Panc1 (cell line): ENCODE measurements at regions of chr1 and their contacts with region 1.

Region 1: DNA sequence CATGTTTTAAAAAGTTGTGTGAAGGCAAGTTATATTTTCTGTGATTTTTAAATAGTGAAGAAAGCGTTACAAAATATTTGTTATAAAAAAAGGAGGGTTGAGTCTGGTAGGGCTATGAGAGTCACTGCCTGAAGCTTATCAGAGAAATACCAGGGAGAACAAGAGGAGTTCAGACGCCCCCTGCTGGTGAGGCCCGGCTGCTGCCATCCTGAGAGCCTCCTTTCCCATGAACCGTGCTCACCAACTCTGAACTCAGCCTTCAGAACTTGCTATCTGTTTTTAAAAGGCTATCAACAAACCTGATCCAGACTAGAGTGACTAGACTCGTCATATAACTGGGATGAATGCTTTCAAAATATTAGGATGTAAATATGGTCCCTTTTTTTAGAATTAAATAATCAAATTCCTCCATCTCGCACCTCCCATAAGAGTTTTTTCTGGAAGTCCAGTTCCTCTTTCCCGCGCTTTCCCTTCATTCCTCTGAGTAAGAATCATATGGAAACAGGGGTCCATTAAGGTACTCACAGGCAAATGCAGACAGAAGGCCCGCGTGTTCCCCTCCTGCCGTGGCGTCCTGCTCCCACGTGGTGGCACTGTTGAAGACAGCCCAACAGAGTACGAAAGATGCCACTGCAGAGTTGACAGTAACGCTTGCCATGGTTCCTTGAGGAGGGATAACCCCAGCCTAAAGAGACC is 26.2 kb upstream of the SPATA6 start:
- DNase-seq: peak; percentile 57
- ATAC-seq: peak; percentile 95
- H3K4me3 ChIP-seq: peak overlapping the region in 1 of 2 experiments; percentile 15; a peak in 1 of 4 replicates
- H3K27ac ChIP-seq: no peak overlapping the region
- H3K4me1 ChIP-seq: peaks cover 3% of the 10 kb centered on the region; the same call in 1 of the 2 replicates
- H3K27me3 ChIP-seq: no peaks in the 10 kb centered on the region
- CTCF ChIP-seq: peak; percentile 98

Region 2: DNA sequence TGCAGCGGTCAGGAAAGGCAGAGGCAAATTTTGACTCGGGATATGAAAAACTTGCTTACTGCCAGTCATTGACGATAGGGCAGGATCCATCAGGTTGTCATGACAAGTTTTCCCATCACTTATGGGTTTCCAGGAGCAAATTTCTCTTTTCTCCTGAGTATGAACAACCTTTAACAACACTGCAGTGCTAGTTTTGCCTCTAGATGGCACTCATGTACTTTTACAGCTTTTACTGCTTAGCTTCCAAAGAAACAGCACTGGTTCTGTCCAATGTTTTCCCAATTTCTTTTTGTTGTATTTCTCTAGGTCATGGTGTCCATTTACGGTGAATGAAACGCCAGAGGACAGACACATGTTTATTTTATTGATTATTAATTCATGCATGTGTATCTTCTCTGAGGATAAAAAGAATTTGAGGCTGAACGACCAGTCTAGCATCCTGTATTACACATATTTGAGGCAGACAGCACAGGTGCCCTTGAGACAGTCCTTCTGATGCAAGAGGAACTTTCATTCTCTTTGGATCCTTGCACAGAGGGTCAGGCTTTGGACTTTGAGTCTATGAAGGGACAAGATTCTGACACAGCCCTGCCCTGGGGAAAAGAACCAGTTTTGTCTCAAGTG is 388.7 kb before region 1 on chr1:
- CTCF ChIA-PET with region 1: no interaction called
- POLR2A ChIA-PET with region 1: no interaction called
- in situ Hi-C with region 1: no loop called
- intact Hi-C with region 1: loop called (anchors 5 kb)
- DNase-seq: peak; percentile 51
- ATAC-seq: peak; percentile 89
- H3K4me3 ChIP-seq: no peak overlapping the region
- H3K27ac ChIP-seq: no peak overlapping the region
- H3K4me1 ChIP-seq: no peaks in the 10 kb centered on the region
- H3K27me3 ChIP-seq: no peaks in the 10 kb centered on the region; the same call in none of the 2 replicates
- CTCF ChIP-seq: peak; percentile 85

Region 3: GRCh38 chr1:48249868-48250267 is 248.4 kb before region 1 on chr1:
- CTCF ChIA-PET with region 1: no interaction called
- POLR2A ChIA-PET with region 1: no interaction called
- in situ Hi-C with region 1: no loop called
- intact Hi-C with region 1: loop called (anchors 10 kb)
- DNase-seq: no peak
- ATAC-seq: no peak
- H3K4me3 ChIP-seq: no peak overlapping the region
- H3K27ac ChIP-seq: no peak overlapping the region
- H3K4me1 ChIP-seq: no peaks in the 10 kb centered on the region
- H3K27me3 ChIP-seq: peaks cover 4% of the 10 kb centered on the region; the same call in 1 of the 2 replicates
- CTCF ChIP-seq: no peak

Region 4: DNA sequence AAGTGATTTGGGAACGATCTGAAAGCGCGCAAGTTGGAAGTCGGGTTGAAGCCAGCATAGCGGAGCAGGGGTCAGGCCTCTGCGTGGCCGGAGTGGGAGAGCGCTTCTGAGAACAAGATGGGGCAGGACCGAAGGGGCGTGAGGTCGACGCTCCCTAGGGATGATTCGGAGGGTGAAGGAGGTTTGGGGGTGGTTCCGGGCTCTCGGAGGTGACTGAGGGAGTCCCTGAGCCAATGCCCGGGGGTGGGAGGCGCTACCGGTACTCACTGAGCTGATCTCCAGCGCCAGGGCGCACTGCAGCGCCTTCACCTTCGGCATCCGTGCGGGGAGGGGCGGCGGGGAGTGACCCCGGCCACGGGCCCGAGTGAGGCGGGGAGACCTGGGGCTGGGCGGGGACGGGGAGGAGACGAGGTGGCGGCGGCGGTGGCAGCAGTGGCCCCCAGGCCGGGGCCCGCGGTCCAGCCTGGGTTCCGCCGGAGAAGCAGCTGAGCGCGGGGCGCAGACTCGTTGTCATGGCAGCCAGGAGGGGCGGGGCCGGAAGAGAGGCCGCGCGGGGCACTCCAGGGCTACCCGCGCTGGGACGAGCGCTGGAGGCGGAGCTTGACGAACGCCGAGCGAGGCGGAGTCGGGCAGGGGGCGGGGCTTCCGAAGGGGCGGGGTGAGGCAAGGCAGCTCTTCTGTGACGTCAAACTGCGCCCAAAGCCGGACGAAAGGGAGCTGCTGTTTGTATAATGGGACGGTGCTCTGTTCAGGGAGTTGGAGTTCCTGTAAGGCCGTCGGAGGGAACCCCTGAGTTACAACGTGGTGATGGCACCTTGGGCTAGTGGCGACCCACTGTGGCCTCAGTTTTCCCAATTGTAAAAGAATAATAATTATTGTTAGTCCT is 26.3 kb before region 1 on chr1 and contains the start of gene SPATA6:
- CTCF ChIA-PET with region 1: interaction called, 18 read pairs
- POLR2A ChIA-PET with region 1: interaction called, 6 read pairs
- in situ Hi-C with region 1: no loop called
- intact Hi-C with region 1: no loop called
- DNase-seq: peak; percentile 78
- ATAC-seq: peak; percentile 94
- H3K4me3 ChIP-seq: peak within 1 kb of the TSS; percentile 82 to 88
- H3K27ac ChIP-seq: peak within 1 kb of the TSS; percentile 93
- H3K4me1 ChIP-seq: peaks cover 13% of the 10 kb centered on the region
- H3K27me3 ChIP-seq: no peaks in the 10 kb centered on the region
- CTCF ChIP-seq: peak; percentile 14
- total RNA-seq, gene SPATA6: 18.2 TPM